ENCODE measurements at regions of chr17 and their contacts with region 1.

Region 1: GRCh38 chr17:7561028-7561575 is 617 bp upstream of the SENP3 start:
- DNase-seq: peak; percentile 92
- H3K4me3 Mint-ChIP-seq: peak overlapping the region; percentile 91
- H3K27ac Mint-ChIP-seq: peak overlapping the region; percentile 91
- H3K4me1 Mint-ChIP-seq: peaks cover 32% of the 10 kb centered on the region
- H3K27me3 Mint-ChIP-seq: no peaks in the 10 kb centered on the region

Region 2: DNA sequence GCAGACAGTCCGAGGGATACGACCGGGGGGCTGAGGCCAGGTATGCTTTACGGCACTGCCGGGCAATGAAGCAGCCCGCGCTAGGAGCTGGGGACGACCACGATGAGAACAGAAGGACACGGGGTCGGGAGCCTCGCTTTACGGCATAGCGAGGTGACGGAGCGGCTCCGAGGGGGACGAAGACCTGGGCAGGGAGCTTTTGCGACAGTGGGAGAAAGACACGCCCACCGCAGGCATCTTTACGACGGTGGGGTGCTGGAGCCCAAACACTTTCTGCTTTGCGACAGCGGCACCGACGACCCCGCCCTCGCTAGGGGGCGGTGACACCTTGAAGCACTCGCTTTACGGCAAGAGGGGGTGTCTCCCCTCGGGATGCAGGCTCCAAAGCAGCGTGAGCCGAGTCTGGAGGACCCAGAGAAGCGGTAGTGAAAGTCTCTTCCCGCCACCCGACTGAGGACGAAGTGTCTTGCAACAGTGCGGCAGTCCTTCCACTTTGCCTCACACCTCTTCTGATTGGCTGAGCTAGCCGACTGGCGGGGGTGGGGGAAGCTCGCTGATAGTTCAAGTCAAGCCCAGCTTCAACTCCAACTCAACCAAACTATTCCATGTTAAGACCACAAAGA is 231.6 kb before region 1 on chr17:
- CTCF ChIA-PET with region 1: interaction called, 11 read pairs
- POLR2A ChIA-PET with region 1: interaction called, 4 read pairs
- intact Hi-C with region 1: no loop called
- DNase-seq: peak; percentile 98
- H3K4me3 Mint-ChIP-seq: peak overlapping the region; percentile 89
- H3K27ac Mint-ChIP-seq: peak overlapping the region; percentile 94
- H3K4me1 Mint-ChIP-seq: peaks cover 41% of the 10 kb centered on the region
- H3K27me3 Mint-ChIP-seq: no peaks in the 10 kb centered on the region

Region 3: GRCh38 chr17:7435221-7435675 is 125.9 kb before region 1 on chr17 and contains the start of gene TMEM102:
- CTCF ChIA-PET with region 1: interaction called, 54 read pairs
- POLR2A ChIA-PET with region 1: interaction called, 3 read pairs
- intact Hi-C with region 1: loop called (anchors 1 kb)
- DNase-seq: peak; percentile 99
- H3K4me3 Mint-ChIP-seq: peak within 1 kb of the TSS; percentile 91
- H3K27ac Mint-ChIP-seq: peak within 1 kb of the TSS; percentile 95
- H3K4me1 Mint-ChIP-seq: peaks cover 36% of the 10 kb centered on the region
- H3K27me3 Mint-ChIP-seq: peaks cover 15% of the 10 kb centered on the region
- total RNA-seq, gene TMEM102: 11.4 to 11.6 TPM

Region 4: GRCh38 chr17:7515911-7516610 is 45.0 kb before region 1 on chr17:
- CTCF ChIA-PET with region 1: interaction called, 148 read pairs
- POLR2A ChIA-PET with region 1: interaction called, 10 read pairs
- intact Hi-C with region 1: loop called (anchors 1 kb)
- DNase-seq: no peak
- H3K4me3 Mint-ChIP-seq: no peak overlapping the region
- H3K27ac Mint-ChIP-seq: no peak overlapping the region
- H3K4me1 Mint-ChIP-seq: no peaks in the 10 kb centered on the region
- H3K27me3 Mint-ChIP-seq: no peaks in the 10 kb centered on the region

Region 5: DNA sequence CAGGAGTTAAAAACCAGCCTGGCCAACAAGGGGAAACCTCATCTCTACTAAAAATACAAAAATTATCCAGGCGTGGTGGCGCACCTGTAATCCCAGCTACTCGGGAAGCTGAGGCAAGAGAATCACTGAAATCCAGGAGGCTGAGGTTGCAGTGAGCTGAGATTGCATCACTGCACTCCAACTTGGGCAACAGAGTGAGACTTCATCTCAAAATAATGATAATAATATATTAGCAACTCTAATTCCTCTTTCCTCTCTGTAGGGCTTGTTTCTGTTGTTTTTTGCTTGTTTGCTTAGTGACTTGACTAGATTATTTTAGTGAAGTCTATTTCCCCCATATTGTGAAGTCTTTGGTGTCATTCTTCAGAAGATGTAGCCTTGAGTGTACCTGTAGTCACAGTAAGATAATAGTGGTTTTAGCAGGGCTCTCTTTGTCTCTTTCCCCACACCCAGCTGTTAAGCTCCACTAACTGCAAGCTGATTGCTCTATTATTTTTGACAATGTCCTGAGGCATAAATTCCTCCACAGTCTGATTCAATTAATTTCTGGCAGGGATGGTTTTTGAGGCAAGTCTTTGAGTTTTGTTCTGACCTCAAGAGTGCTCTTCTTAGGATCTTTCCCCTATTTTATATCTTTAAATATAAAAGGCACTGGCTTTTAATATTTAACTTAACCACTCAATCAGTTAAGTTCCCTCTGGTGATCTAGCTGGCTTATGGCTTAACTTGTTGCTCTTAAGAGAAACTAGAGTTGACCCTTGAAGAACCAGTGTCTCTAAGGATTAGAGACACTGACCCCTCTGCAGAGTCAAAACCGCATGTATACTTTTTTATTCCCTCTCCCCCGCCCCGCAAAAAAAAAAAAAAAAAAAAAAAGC is 30.8 kb before region 1 on chr17:
- CTCF ChIA-PET with region 1: interaction called, 99 read pairs
- POLR2A ChIA-PET with region 1: interaction called, 3 read pairs
- intact Hi-C with region 1: no loop called
- DNase-seq: no peak
- H3K4me3 Mint-ChIP-seq: no peak overlapping the region
- H3K27ac Mint-ChIP-seq: no peak overlapping the region
- H3K4me1 Mint-ChIP-seq: no peaks in the 10 kb centered on the region
- H3K27me3 Mint-ChIP-seq: no peaks in the 10 kb centered on the region

Region 6: DNA sequence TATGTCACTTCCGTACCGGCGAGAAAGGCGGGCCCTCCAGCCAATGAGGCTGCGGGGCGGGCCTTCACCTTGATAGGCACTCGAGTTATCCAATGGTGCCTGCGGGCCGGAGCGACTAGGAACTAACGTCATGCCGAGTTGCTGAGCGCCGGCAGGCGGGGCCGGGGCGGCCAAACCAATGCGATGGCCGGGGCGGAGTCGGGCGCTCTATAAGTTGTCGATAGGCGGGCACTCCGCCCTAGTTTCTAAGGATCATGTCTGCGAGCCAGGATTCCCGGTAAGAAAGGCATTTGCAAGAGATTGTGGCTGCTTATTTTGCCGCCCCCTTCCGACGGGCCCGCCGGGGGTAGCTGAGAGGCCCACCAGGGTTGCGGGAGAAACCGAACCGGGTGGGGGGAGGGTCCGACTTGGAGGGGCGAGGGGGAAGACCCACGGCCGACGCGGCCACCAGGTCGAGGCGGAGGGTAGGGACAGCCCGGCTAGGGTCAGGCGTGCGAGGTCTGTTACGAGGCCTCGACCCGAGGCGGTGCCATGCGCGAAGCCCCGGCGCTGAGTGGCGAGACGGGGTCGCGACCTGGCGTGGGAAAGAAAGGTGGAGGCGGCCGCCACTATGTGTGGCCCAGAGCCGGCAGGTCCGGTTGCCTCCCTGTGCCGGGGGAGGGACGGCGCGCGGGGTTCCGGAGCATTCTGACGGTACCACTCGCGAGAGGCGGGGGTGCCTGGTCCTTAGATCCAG is 11.7 kb after region 1 on chr17:
- CTCF ChIA-PET with region 1: interaction called, 25 read pairs
- POLR2A ChIA-PET with region 1: interaction called, 28 read pairs
- intact Hi-C with region 1: loop called (anchors 1 kb)
- DNase-seq: peak; percentile 100
- H3K4me3 Mint-ChIP-seq: peak overlapping the region; percentile 99
- H3K27ac Mint-ChIP-seq: peak overlapping the region; percentile 100
- H3K4me1 Mint-ChIP-seq: peaks cover 50% of the 10 kb centered on the region
- H3K27me3 Mint-ChIP-seq: peaks cover 2% of the 10 kb centered on the region

Region 7: DNA sequence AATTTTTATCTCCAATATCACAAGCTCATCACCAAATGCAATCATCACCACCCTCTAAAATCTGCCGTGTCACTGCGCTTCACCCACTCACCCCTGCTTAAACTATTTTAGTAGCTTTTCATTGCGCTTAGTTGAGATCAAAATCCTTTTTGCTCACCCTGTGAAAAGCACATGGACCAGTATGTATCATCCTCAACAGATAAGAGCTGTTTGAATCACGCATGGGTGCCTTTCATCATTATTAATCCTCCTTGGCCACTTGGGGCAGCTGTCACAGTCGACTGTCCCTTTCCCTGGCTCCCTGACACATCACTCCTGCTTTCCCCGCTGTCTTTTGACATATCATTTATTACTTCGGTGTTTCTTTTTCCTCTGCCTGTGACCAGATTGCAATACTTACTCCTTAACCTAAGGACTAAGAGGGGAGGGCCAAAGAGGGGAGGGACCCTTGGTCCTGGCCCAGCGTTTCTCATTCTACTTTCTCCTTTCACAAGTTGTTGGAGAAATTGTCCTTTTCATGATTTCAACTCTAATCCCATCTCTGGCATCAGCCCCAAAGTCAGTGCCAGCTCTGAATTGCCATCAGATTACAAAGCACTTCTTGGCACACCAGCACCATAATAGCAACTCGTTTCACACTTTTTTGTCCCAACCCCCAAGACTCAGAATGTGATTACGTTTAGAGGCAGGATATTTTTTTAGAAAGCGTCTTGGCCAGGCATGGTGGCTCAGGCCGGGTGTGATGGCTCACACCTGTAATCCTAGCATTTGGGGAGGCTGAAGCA is 264.3 kb after region 1 on chr17:
- CTCF ChIA-PET with region 1: no interaction called
- POLR2A ChIA-PET with region 1: no interaction called
- intact Hi-C with region 1: no loop called
- DNase-seq: no peak
- H3K4me3 Mint-ChIP-seq: no peak overlapping the region
- H3K27ac Mint-ChIP-seq: no peak overlapping the region
- H3K4me1 Mint-ChIP-seq: no peaks in the 10 kb centered on the region
- H3K27me3 Mint-ChIP-seq: peaks cover 1% of the 10 kb centered on the region

Measured in activated CD4-positive, alpha-beta memory T cell treated with anti-CD3 and anti-CD28 coated beads for 36 hours (primary cell).